ENCODE measurements at regions of chr22 and their contacts with region 1.

Region 1: DNA sequence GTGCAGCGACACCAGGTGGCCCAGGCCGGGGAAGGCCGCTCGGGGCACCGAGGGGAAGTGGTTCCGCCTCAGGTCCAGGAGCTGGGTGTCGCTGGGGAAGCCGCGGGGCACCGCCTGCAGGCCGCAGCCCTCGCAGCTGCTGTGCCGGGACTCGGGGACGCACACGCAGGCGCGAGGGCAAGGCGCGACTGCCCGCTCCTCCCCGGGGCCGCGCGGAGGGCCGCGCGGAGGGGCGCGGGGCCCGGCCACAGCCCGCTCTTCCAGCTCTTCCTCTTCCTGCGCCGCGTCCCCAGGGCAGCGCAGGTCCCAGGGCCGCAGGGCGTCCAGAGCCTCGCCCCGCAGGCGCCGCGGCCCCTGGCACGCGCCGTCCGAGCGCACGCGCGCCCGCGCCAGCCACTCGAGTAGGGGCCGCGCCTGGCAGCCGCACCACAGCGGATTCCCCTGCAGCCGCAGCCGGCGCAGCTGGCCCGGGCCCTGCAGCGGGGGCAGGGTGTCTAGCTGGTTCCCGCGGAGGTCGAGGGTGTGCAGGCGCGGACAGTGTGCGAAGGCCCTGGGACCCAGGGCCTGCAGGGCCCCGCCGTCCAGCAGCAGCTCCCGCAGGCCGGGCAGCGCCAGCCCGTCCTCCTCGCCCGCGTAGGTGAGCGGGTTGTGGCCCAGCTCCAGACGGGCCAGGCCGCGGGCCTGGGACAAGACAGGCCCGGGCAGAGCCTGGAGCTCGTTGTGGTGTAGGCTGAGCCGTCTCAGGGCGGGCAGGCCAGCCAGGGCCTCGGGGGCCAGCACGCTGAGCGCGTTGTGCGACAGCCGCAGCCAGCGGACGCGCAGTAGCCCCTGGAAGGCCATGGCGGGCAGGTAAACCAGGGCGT is 2.8 kb downstream of the CHADL start:
- DNase-seq: peak; percentile 74 to 92 (median 84)
- ATAC-seq: peak; percentile 96
- H3K4me3 ChIP-seq: peak overlapping the region; percentile 44
- H3K4me3 Mint-ChIP-seq: peak overlapping the region; percentile 73
- H3K27ac ChIP-seq: no peak overlapping the region
- H3K27ac Mint-ChIP-seq: no peak overlapping the region
- H3K4me1 ChIP-seq: peaks cover 16% of the 10 kb centered on the region
- H3K4me1 Mint-ChIP-seq: peaks cover 5% of the 10 kb centered on the region
- H3K27me3 ChIP-seq: no peaks in the 10 kb centered on the region
- H3K27me3 Mint-ChIP-seq: no peaks in the 10 kb centered on the region
- CTCF ChIP-seq: no peak

Region 2: DNA sequence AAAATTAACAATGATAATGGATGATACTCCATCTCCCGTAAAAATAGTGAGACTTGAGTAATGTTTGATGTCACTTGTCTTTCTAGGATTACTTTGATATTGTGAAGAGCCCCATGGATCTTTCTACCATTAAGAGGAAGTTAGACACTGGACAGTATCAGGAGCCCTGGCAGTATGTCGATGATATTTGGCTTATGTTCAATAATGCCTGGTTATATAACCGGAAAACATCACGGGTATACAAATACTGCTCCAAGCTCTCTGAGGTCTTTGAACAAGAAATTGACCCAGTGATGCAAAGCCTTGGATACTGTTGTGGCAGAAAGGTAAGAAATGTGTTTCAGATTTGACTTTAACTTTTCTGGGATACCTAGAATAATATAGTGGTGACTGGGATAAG is 80.9 kb before region 1 on chr22:
- CTCF ChIA-PET with region 1: no interaction called
- POLR2A ChIA-PET with region 1: no interaction called
- intact Hi-C with region 1: loop called in 1 of 2 experiments (anchors 10 kb)
- DNase-seq: no peak
- ATAC-seq: no peak
- H3K4me3 ChIP-seq: no peak overlapping the region
- H3K4me3 Mint-ChIP-seq: no peak overlapping the region
- H3K27ac ChIP-seq: no peak overlapping the region
- H3K27ac Mint-ChIP-seq: no peak overlapping the region
- H3K4me1 ChIP-seq: no peaks in the 10 kb centered on the region
- H3K4me1 Mint-ChIP-seq: no peaks in the 10 kb centered on the region
- H3K27me3 ChIP-seq: no peaks in the 10 kb centered on the region
- H3K27me3 Mint-ChIP-seq: no peaks in the 10 kb centered on the region
- CTCF ChIP-seq: no peak

Region 3: DNA sequence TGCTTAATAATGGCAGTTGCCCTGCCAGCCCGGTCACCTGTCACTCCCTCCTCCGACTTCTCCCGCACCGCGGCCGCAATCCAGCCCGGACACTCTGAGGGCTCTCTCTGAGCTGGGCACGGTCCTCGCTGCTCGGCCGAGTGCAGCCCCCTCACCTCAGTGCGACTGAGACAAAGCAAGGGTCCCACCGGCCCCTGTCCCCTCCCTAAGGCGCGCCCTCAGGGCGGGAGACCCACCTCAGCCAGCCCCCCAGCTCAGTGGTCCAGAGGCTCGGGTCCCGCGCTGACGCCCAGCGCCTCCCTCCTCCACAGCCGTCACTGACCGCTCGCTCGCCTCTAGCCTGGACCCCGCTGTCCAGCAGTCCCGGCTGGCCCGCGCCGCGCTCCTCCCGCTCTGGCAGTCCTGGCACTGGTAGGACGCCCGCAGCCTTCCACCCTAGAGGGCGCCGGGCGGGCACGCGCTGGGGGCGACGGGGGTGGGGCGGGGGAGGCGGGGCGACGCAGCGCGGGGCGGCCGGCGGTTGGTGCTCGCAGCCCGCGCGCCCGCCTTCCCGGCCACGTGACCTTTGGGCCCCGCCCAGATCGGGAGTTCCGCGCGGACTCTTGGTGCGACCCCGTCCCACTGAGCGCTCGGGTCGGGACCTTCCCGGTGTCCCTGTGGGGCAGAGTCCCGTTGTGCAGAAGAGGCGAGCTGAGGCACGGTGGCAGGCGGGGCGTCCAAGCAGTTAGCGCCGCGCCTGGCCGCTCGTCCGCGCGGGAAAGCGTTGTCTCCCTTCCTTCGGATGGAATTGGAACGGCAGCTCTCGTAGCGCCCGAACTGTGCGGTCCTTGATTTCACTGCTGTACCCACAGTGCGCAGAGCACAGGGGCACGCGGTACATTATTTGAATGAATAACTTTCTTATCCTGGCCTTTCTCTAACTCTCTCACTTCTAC is 40.6 kb before region 1 on chr22:
- CTCF ChIA-PET with region 1: interaction called, 18 read pairs
- POLR2A ChIA-PET with region 1: interaction called, 4 read pairs
- intact Hi-C with region 1: loop called in 1 of 2 experiments (anchors 5 kb)
- DNase-seq: peak; percentile 62 to 93 (median 76)
- ATAC-seq: peak; percentile 85
- H3K4me3 ChIP-seq: peak overlapping the region; percentile 92
- H3K4me3 Mint-ChIP-seq: peak overlapping the region; percentile 95
- H3K27ac ChIP-seq: no peak overlapping the region
- H3K27ac Mint-ChIP-seq: peak overlapping the region; percentile 28
- H3K4me1 ChIP-seq: peaks cover 19% of the 10 kb centered on the region
- H3K4me1 Mint-ChIP-seq: peaks cover 14% of the 10 kb centered on the region
- H3K27me3 ChIP-seq: no peaks in the 10 kb centered on the region
- H3K27me3 Mint-ChIP-seq: no peaks in the 10 kb centered on the region
- CTCF ChIP-seq: no peak

Region 4: GRCh38 chr22:41204992-41205900 is 32.7 kb before region 1 on chr22 and contains the start of gene L3MBTL2:
- CTCF ChIA-PET with region 1: interaction called, 10 read pairs
- POLR2A ChIA-PET with region 1: interaction called, 4 read pairs
- intact Hi-C with region 1: loop called in 1 of 2 experiments (anchors 5 kb)
- DNase-seq: peak; percentile 95 to 99 (median 98)
- ATAC-seq: peak; percentile 100
- H3K4me3 ChIP-seq: peak within 1 kb of the TSS; percentile 96
- H3K4me3 Mint-ChIP-seq: peak within 1 kb of the TSS; percentile 97
- H3K27ac ChIP-seq: peak within 1 kb of the TSS; percentile 59 to 82
- H3K27ac Mint-ChIP-seq: peak within 1 kb of the TSS; percentile 87
- H3K4me1 ChIP-seq: peaks cover 23% of the 10 kb centered on the region
- H3K4me1 Mint-ChIP-seq: peaks cover 23% of the 10 kb centered on the region
- H3K27me3 ChIP-seq: peaks cover 0 to 6% of the 10 kb centered on the region in 2 experiments
- H3K27me3 Mint-ChIP-seq: no peaks in the 10 kb centered on the region
- CTCF ChIP-seq: no peak
- total RNA-seq, gene L3MBTL2: 16.4 to 17.5 TPM

Region 5: GRCh38 chr22:41217553-41218157 is 20.3 kb before region 1 on chr22:
- CTCF ChIA-PET with region 1: interaction called, 7 read pairs
- POLR2A ChIA-PET with region 1: interaction called, 14 read pairs
- intact Hi-C with region 1: no loop called
- DNase-seq: peak in 6 of 14 experiments; percentile 11 to 70 (median 46)
- ATAC-seq: peak; percentile 100
- H3K4me3 ChIP-seq: peak overlapping the region; percentile 17
- H3K4me3 Mint-ChIP-seq: peak overlapping the region; percentile 42
- H3K27ac ChIP-seq: no peak overlapping the region
- H3K27ac Mint-ChIP-seq: peak overlapping the region; percentile 42
- H3K4me1 ChIP-seq: peaks cover 22% of the 10 kb centered on the region
- H3K4me1 Mint-ChIP-seq: peaks cover 10% of the 10 kb centered on the region
- H3K27me3 ChIP-seq: no peaks in the 10 kb centered on the region
- H3K27me3 Mint-ChIP-seq: no peaks in the 10 kb centered on the region
- CTCF ChIP-seq: no peak

Region 6: DNA sequence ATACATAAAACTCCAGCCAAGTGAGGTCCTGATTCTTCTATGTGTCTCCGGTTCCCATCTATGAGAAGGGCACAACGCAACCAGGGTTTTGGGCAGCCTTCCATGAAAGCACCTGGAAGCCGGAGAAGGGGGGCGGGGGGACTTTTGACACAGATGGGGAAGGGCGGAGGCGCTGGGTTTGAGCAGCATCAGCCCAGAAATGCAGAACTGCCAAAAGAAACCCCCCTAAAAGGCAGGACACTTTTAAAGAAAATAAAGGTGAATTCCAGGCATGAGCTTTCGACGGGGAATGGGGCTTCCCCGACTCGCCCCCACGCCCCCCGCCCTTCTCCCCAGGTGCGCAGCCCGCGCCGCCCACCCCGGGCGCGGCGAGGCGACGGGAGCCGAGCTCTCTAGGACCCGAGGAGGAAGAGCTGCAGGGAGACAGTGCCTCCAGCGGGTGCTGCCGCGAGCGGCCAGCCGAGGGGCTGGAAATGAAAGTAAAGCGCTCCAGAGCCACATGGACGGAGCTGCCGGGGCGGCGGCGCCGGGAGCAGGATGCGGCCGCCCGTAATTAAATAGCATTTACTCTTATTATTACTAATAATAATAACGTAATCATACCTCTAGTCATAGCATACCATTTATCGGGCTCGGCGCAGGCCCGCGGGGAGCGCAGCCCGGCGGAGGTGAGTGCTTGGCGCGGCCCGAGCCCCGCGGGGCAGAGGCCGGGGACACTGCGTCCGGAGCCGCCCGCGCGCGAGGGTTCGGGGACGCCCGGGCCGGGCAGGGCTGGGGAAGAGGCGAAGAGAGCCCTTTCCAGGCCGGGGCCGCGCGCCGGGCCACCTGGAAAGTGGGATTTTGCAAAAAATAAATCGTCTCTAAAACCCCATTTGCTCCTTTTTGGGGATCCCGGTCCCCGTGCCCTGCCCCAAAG is 63.4 kb after region 1 on chr22 and contains the start of gene ZC3H7B:
- CTCF ChIA-PET with region 1: interaction called, 7 read pairs
- POLR2A ChIA-PET with region 1: interaction called, 10 read pairs
- intact Hi-C with region 1: no loop called
- DNase-seq: peak; percentile 71 to 95 (median 79)
- ATAC-seq: peak; percentile 97
- H3K4me3 ChIP-seq: peak within 1 kb of the TSS; percentile 97
- H3K4me3 Mint-ChIP-seq: peak within 1 kb of the TSS; percentile 84
- H3K27ac ChIP-seq: peak within 1 kb of the TSS; percentile 82 to 83
- H3K27ac Mint-ChIP-seq: peak within 1 kb of the TSS; percentile 92
- H3K4me1 ChIP-seq: peaks cover 30% of the 10 kb centered on the region
- H3K4me1 Mint-ChIP-seq: peaks cover 33% of the 10 kb centered on the region
- H3K27me3 ChIP-seq: no peaks in the 10 kb centered on the region
- H3K27me3 Mint-ChIP-seq: no peaks in the 10 kb centered on the region
- CTCF ChIP-seq: peak; percentile 63
- total RNA-seq, gene ZC3H7B: 29.5 to 32.7 TPM

Measured in CD4-positive, alpha-beta T cell (primary cell).